ENCODE measurements at regions of chr5 and their contacts with region 1.

Region 1: GRCh38 chr5:159531554-159532105 is 201.3 kb upstream of the IL12B start:
- DNase-seq: no peak
- H3K4me3 ChIP-seq: no peak overlapping the region
- H3K27ac ChIP-seq: no peak overlapping the region
- H3K4me1 ChIP-seq: no peaks in the 10 kb centered on the region
- H3K27me3 ChIP-seq: no peaks in the 10 kb centered on the region
- CTCF ChIP-seq: peak in 1 of 6 experiments; percentile 11
- POLR2A ChIP-seq: no peak

Region 2: GRCh38 chr5:159451197-159452052 is 80.2 kb before region 1 on chr5:
- intact Hi-C with region 1: loop called (anchors 5 kb)
- DNase-seq: peak; percentile 54 to 64
- H3K4me3 ChIP-seq: no peak overlapping the region
- H3K27ac ChIP-seq: peak overlapping the region in 2 of 3 donors; percentile 40 to 72
- H3K4me1 ChIP-seq: peaks cover 0 to 5% of the 10 kb centered on the region in 2 donors
- H3K27me3 ChIP-seq: no peaks in the 10 kb centered on the region
- CTCF ChIP-seq: no peak
- POLR2A ChIP-seq: no peak

Region 3: GRCh38 chr5:159497221-159497620 is 34.4 kb before region 1 on chr5:
- intact Hi-C with region 1: no loop called
- DNase-seq: no peak
- H3K4me3 ChIP-seq: no peak overlapping the region
- H3K27ac ChIP-seq: no peak overlapping the region
- H3K4me1 ChIP-seq: no peaks in the 10 kb centered on the region
- H3K27me3 ChIP-seq: no peaks in the 10 kb centered on the region
- CTCF ChIP-seq: no peak
- POLR2A ChIP-seq: no peak

Measured in thyroid gland (tissue), 4 donors.